Posterior vena cava (tissue), 2 donors: ENCODE measurements at regions of chr6 and their contacts with region 1.

Region 1: DNA sequence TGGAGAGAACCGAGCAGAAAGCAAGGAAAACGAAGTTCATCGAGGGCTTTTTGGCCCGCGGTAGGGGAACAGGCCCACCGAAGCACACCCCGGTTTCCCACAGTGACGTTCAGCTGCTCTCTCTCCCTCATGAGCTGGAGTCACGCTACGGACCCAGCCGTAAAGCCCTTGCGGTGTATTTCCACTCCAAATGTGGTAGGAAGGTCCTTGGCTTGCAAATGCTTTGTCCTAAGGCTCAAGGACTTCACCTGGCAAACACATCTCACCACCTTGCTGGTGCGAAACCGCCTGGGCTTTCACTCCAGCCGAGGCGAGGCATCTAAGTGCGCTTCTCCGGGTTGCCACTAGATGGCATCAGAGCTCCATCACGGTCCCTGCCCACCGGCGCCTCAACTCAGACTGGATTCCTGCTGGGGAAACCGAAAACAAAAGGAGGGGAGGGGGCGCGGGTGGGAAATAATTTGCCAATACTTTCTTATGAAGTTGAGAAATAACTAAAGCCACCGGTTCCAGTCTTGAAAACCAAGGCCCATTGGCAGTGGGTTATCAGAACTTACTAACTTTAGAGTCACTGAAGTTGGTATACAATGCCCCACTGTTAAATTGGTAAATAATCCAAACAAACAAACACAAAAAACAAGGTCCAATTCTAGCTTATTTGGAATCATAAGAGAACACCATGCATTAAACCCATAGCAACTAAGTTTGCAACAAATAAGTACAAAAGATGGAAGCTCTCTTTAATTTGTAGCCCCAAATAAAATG is 13.4 kb upstream of the FOXC1 start:
- DNase-seq: peak; percentile 88

Region 2: GRCh38 chr6:1515280-1515679 is 81.0 kb before region 1 on chr6:
- intact Hi-C with region 1: no loop called
- DNase-seq: no peak

Region 3: GRCh38 chr6:2237001-2237400 is 640.7 kb after region 1 on chr6:
- intact Hi-C with region 1: loop called in 1 of 2 experiments (anchors 5 kb)
- DNase-seq: no peak

Region 4: GRCh38 chr6:2639896-2640295 is 1043.6 kb after region 1 on chr6:
- intact Hi-C with region 1: loop called (anchors 5 to 10 kb)
- DNase-seq: no peak

Region 5: DNA sequence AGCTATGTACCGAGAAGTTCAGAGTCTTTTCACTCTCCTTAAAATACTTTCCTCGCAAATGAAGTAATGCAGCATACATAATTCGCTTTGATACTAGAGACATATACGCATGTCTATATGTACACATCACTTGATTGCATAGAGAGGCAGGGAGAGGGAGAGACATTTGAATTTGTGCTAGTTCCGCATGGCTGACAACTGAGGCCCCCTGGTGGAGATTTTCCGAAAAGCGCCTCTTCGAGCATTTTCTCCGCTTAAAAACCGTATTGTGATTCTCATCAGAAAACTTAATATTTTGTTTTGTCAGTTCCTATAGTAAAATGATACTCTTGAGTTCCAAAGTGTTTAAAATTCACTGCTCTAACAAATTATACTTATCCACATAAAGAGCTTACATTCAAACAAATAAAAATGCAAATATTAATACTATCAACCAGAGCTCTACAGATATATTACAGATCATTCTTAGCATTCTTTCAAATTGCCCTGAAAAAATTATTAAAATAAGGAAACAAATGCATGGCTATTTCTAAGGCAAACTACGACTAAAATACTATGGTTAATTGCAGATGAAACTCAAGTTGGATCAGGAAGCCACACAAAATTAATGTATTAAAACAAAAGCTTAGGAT is 1153.8 kb after region 1 on chr6:
- intact Hi-C with region 1: loop called in 1 of 2 experiments (anchors 5 kb)
- DNase-seq: no peak